IMR-90 (cell line): ENCODE measurements at regions of chr22 and their contacts with region 1.

Region 1: GRCh38 chr22:33920927-33921524 is 750 bp upstream of the LARGE1 start:
- DNase-seq: peak; percentile 94
- ATAC-seq: peak; percentile 85
- H3K4me3 ChIP-seq: peak overlapping the region; percentile 86
- H3K27ac ChIP-seq: peak overlapping the region; percentile 75
- H3K4me1 ChIP-seq: no peaks in the 10 kb centered on the region
- H3K27me3 ChIP-seq: no peaks in the 10 kb centered on the region
- CTCF ChIP-seq: no peak
- POLR2A ChIP-seq: peak; percentile 80
- RAD21 ChIP-seq: no peak

Region 2: DNA sequence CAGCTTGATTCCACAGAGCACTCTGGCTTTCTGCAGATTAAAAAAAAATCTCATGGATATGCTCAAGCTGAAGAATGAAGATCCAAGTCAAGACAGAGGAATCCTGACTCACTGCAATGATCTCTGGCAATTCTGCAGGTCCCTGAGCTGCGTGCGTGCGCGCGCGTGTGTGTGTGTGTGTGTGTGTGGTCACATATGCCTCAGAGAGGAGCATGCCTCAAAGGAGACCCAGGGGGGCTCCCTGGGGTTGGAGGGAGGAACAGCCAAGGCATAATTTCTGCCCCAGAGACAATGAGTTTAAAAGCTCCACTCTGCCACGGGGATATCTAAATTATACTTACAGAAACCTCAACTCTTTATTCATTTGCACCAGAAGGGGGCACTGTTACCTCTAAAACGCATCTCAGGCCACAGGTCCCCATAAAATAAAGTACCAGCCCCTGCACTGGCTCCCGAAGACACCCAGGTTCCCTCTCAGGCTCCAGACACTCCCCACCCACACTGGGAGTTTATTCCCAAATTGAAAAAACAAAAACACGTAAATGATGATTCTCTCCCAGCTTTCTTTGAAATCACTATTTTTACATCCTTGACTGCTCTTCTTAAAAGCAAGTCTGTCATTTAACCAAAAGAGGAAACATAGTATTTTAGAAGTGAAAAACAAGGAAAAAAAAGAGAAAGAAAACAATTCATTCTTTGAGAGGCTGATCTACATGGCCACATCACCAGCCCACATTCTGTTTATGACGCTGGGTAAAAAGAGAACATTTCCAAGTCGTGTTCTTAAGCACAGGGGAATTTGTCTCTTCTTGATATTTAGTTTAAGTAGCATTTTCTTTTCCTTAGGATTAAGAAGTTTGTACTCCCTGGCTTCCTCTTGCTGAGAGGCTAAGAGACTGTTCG is 401.7 kb before region 1 on chr22:
- CTCF ChIA-PET with region 1: interaction called, 5 read pairs
- POLR2A ChIA-PET with region 1: no interaction called
- dilution Hi-C with region 1: no loop called
- in situ Hi-C with region 1: loop called (anchors 10 kb)
- intact Hi-C with region 1: loop called (anchors 1 kb)
- DNase-seq: peak; percentile 61
- ATAC-seq: peak; percentile 85
- H3K4me3 ChIP-seq: no peak overlapping the region
- H3K27ac ChIP-seq: no peak overlapping the region
- H3K4me1 ChIP-seq: 0 out of 2 replicates have a peak, but pooled peaks cover 1% of the 10 kb centered on the region
- H3K27me3 ChIP-seq: no peaks in the 10 kb centered on the region
- CTCF ChIP-seq: peak; percentile 73
- POLR2A ChIP-seq: no peak
- RAD21 ChIP-seq: peak; percentile 79

Region 3: DNA sequence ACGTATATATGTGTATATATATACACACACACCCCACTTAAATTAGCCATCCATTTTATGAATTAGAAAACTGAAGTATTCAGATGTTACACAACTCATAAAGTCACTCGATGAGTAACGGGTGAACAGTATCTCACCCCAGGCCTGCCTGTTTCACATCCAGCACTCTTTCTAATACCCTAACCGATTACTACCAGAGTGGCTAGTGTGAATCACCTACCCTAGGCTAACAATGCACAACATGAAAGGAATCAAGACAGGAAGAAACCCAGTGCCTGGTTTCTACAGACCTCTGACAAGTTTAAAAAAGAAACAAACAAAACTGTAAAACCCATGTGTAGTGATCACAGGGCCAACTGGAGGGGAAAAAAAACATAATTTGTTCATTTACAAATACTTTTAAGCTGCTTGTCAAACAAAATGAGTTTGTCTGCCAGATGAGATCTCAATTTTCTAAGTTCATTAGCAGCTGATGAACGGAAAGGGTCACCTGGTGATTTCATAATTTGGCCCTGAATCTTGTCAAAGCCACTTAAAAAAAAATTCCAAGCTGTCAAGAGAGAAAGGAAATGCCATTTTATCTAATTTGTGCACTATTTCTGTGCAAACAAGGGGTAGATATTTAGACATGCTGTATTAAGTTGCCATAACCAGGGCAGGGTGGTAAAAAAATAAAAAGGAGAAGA is 135.6 kb before region 1 on chr22:
- CTCF ChIA-PET with region 1: no interaction called
- POLR2A ChIA-PET with region 1: no interaction called
- dilution Hi-C with region 1: no loop called
- in situ Hi-C with region 1: no loop called
- intact Hi-C with region 1: loop called (anchors 5 kb)
- DNase-seq: peak; percentile 88
- ATAC-seq: peak; percentile 92
- H3K4me3 ChIP-seq: no peak overlapping the region
- H3K27ac ChIP-seq: no peak overlapping the region
- H3K4me1 ChIP-seq: no peaks in the 10 kb centered on the region
- H3K27me3 ChIP-seq: no peaks in the 10 kb centered on the region
- CTCF ChIP-seq: no peak
- POLR2A ChIP-seq: no peak
- RAD21 ChIP-seq: no peak

Region 4: GRCh38 chr22:34111210-34111824 is 190.3 kb after region 1 on chr22:
- CTCF ChIA-PET with region 1: no interaction called
- POLR2A ChIA-PET with region 1: no interaction called
- dilution Hi-C with region 1: no loop called
- in situ Hi-C with region 1: no loop called
- intact Hi-C with region 1: loop called (anchors 2 kb)
- DNase-seq: no peak
- ATAC-seq: peak; percentile 77
- H3K4me3 ChIP-seq: no peak overlapping the region
- H3K27ac ChIP-seq: no peak overlapping the region
- H3K4me1 ChIP-seq: no peaks in the 10 kb centered on the region
- H3K27me3 ChIP-seq: no peaks in the 10 kb centered on the region
- CTCF ChIP-seq: peak; percentile 41
- POLR2A ChIP-seq: no peak
- RAD21 ChIP-seq: peak; percentile 36

Region 5: GRCh38 chr22:35150183-35151107 is 1229.4 kb after region 1 on chr22:
- CTCF ChIA-PET with region 1: interaction called, 4 read pairs
- POLR2A ChIA-PET with region 1: interaction called, 3 read pairs
- dilution Hi-C with region 1: no loop called
- in situ Hi-C with region 1: loop called (anchors 10 kb)
- intact Hi-C with region 1: loop called (anchors 1 kb)
- DNase-seq: peak; percentile 42
- ATAC-seq: peak; percentile 77
- H3K4me3 ChIP-seq: no peak overlapping the region
- H3K27ac ChIP-seq: no peak overlapping the region
- H3K4me1 ChIP-seq: no peaks in the 10 kb centered on the region
- H3K27me3 ChIP-seq: peaks cover 4% of the 10 kb centered on the region
- CTCF ChIP-seq: peak; percentile 60
- POLR2A ChIP-seq: no peak
- RAD21 ChIP-seq: peak; percentile 44